OCI-LY7 (cell line): ENCODE measurements at regions of chr4 and their contacts with region 1.

Region 1: GRCh38 chr4:1249148-1249730 is 309 bp upstream of the CTBP1 start:
- DNase-seq: peak; percentile 93
- H3K4me3 ChIP-seq: peak overlapping the region; percentile 76
- H3K27ac ChIP-seq: peak overlapping the region; percentile 76
- H3K4me1 ChIP-seq: peaks cover 28% of the 10 kb centered on the region
- CTCF ChIP-seq: no peak

Region 2: DNA sequence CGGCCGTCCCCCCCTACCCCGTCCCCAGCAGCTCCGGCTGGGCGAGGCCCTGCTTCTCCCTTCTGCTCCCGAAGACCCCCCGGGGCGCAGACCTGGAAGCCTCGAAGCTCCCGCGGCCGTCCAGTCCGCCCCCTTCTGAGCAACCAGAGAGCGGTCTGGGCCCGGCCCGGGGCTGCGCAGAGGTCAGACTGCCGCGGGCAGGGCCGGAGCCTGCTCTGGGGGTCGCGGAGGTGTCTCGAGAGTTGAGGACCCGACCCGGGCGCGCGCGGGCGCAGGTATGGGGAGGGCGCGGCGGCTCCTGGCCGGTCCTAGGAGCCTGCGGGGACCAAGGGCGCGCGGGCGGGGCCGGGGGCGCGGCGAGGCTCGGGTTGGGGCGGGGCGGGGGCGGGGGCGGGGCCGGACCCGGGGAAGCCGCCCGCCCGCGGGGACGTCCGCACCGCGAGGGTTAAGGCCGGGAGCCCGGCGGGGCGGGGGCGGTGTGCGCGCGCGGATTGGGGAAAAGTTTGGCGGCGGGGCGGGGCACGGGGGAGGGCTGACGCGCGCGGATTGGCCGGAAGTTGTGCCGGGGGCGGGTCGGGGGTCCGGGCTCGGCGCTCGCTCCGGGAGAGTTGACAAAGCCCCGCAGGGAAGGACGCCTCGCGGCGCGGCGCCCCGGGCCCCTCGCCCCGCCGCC is 238.1 kb before region 1 on chr4 and contains the start of gene FGFRL1:
- CTCF ChIA-PET with region 1: no interaction called
- POLR2A ChIA-PET with region 1: no interaction called
- intact Hi-C with region 1: loop called (anchors 10 kb)
- DNase-seq: peak; percentile 85
- H3K4me3 ChIP-seq: peak within 1 kb of the TSS; percentile 64
- H3K27ac ChIP-seq: no peak within 1 kb of the TSS
- H3K4me1 ChIP-seq: peaks cover 29% of the 10 kb centered on the region
- CTCF ChIP-seq: no peak
- total RNA-seq, gene FGFRL1: 1.4 and 1.8 TPM in 2 replicates

Region 3: GRCh38 chr4:1200425-1201035 is 48.7 kb before region 1 on chr4:
- CTCF ChIA-PET with region 1: no interaction called
- POLR2A ChIA-PET with region 1: no interaction called
- intact Hi-C with region 1: loop called (anchors 5 kb)
- DNase-seq: no peak
- H3K4me3 ChIP-seq: peak overlapping the region; percentile 7
- H3K27ac ChIP-seq: peak overlapping the region; percentile 36
- H3K4me1 ChIP-seq: peaks cover 25% of the 10 kb centered on the region
- CTCF ChIP-seq: no peak

Region 4: DNA sequence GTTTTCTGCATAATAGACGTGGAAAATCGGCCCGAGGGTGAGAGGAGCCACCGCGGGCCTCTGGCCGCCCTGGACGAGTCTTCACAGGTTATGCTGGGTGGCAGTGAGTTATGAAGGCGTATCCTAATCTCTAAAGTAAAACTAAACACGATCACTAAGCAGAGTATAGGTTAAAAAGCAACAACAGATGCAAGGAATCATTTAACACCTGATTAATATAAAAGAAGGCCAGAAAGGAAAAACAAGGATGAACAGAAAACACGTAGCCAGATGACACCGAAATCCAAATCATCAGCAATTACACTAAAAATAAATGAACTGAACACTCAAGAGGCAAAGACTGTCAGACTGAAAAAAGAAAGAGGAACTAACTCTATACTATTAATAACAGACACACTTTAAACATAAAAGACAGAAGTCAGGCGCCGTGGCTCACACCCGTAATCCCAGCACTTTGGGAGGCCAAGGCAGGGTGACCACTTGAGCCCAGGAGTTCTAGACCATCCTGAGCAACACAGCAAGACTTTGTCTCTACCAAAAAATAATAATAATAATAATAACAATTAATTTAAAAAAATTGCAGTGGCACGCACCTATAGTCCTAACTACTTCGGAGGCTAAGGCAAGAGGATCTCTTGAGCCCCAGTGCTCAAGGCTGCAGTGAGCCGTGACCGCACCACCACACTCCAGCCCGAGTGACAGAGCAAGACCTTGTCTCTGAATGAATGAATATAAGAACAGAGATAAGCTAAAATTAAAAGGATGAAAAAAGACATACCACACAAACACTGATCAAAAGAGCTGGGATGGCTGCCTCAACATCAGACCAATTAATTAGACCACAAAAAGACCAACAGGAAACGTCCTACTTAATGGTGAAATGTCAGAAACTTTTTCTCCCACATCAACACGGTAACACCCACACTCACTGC is 30.3 kb before region 1 on chr4:
- CTCF ChIA-PET with region 1: no interaction called
- POLR2A ChIA-PET with region 1: no interaction called
- intact Hi-C with region 1: loop called (anchors 1 kb)
- DNase-seq: peak; percentile 86
- H3K4me3 ChIP-seq: peak overlapping the region; percentile 62
- H3K27ac ChIP-seq: peak overlapping the region; percentile 99
- H3K4me1 ChIP-seq: peaks cover 77% of the 10 kb centered on the region
- CTCF ChIP-seq: no peak

Region 5: GRCh38 chr4:1266881-1267763 is 17.9 kb after region 1 on chr4:
- CTCF ChIA-PET with region 1: no interaction called
- POLR2A ChIA-PET with region 1: interaction called, 4 read pairs
- intact Hi-C with region 1: loop called (anchors 2 kb)
- DNase-seq: no peak
- H3K4me3 ChIP-seq: peak overlapping the region; percentile 61
- H3K27ac ChIP-seq: peak overlapping the region; percentile 68
- H3K4me1 ChIP-seq: peaks cover 14% of the 10 kb centered on the region
- CTCF ChIP-seq: no peak

Region 6: DNA sequence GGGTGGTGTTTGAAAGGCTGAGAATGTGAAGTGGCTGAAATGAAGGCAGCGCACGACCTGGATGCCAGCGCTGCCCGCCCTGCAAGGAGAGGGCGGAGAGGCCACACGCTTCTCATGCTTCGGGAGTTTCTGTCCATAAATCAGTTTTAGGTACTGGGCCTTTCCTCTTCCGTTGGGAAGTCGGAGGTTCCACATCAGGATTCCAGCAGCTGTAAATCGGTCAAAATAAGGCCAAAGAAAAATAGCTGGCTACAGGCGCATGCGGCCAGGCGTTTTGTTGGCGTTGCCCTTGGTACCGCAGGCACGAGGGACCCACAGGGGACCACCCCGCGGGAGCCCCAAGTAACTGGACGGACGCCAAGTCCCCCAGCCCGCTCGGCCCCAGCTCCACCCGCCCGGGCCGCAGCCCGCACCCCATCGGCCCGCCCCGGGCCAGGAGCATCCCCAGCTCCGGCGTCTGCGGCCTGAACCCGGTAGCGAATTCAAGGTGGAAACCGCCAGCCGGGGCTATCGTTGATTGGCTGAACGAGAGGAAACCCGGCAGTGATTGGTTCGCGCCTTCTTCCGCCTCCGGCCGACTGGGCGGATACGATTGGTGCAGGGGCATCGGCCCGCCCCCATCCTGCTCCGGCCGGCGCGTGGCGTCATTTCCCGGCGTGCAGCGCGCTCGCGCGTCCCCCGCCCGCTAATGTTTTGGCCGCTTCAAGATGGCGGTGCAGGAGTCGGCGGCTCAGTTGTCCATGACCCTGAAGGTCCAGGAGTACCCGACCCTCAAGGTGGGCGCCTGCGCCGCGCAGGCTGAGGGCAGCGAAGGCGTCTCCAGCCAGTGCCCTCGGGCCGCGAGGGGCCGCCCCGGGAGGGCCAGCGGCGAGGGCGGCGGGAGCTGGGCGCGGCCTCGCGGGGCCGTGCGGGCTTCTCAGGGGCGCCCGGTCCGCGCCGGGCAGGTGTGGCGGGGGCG is 40.2 kb after region 1 on chr4 and contains the start of gene MAEA:
- CTCF ChIA-PET with region 1: no interaction called
- POLR2A ChIA-PET with region 1: no interaction called
- intact Hi-C with region 1: loop called (anchors 2 kb)
- DNase-seq: peak; percentile 98
- H3K4me3 ChIP-seq: peak within 1 kb of the TSS; percentile 93
- H3K27ac ChIP-seq: peak within 1 kb of the TSS; percentile 52
- H3K4me1 ChIP-seq: peaks cover 34% of the 10 kb centered on the region
- CTCF ChIP-seq: no peak
- total RNA-seq, gene MAEA: 52.5 and 53.2 TPM in 2 replicates

Region 7: DNA sequence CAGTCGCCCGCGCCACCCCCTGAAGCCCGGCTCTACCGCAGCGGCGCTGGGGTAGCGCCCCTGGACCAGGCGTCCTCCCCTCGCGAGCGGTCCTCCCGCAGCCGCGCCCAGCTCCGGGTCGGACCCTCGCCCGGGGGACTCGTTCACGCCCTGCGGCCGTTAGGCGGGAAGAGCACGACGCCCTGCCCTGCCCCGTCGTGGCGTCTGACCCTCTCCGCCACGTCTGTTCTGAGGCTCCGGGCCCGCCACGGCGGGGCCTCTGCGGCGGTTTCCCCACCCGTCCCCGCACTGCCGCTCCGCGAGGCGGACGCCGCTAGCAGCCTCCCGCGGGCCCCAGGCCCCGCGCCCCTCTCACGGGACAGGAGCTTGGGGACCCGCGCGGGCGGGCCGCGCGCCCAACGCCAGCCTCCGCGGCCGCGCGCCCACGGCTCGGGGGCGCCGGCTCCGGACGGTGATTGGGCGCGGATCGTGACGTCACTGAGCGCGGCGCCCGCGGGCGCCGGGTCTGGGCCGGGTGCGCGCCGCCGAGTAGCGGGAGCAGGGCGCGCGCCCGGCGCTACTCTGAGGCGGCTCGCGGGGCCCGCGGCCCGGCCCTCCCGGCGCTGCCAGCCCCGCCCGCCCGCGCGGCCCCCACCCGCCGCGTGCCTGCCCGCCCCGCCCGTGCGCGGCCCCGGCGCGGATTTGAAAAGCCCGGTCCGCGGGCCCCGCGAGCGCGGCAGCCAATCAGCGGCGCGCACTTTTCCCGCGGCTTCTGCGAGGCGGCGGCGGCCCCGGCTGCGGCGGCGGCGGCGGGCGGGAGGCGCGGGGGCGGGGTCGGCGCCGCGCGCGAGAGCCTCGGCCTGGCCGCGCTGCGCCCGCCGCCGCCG is 621.6 kb after region 1 on chr4 and contains the start of gene NSD2:
- CTCF ChIA-PET with region 1: no interaction called
- POLR2A ChIA-PET with region 1: no interaction called
- intact Hi-C with region 1: loop called (anchors 2 kb)
- DNase-seq: peak; percentile 94
- H3K4me3 ChIP-seq: peak within 1 kb of the TSS; percentile 94
- H3K27ac ChIP-seq: peak within 1 kb of the TSS; percentile 88
- H3K4me1 ChIP-seq: peaks cover 33% of the 10 kb centered on the region
- CTCF ChIP-seq: no peak
- total RNA-seq, gene NSD2: 158 and 169 TPM in 2 replicates